ENCODE measurements at regions of chr10 and their contacts with region 1.

Region 1: GRCh38 chr10:119103903-119104652 is at the start of gene DENND10:
- DNase-seq: peak; percentile 56 to 71 (median 60)
- H3K4me3 ChIP-seq: peak within 1 kb of the TSS; percentile 52 to 59
- H3K4me3 Mint-ChIP-seq: peak within 1 kb of the TSS; percentile 79 to 88 (median 86)
- H3K27ac ChIP-seq: peak within 1 kb of the TSS; percentile 54
- H3K27ac Mint-ChIP-seq: peak within 1 kb of the TSS; percentile 72 to 95 (median 91)
- H3K4me1 ChIP-seq: peaks cover 34% of the 10 kb centered on the region
- H3K4me1 Mint-ChIP-seq: peaks cover 14 to 46% (median 34%) of the 10 kb centered on the region in 4 donors
- H3K27me3 ChIP-seq: no peaks in the 10 kb centered on the region
- H3K27me3 Mint-ChIP-seq: no peaks in the 10 kb centered on the region
- total RNA-seq, gene DENND10: 48.0 to 53.4 TPM

Region 2: DNA sequence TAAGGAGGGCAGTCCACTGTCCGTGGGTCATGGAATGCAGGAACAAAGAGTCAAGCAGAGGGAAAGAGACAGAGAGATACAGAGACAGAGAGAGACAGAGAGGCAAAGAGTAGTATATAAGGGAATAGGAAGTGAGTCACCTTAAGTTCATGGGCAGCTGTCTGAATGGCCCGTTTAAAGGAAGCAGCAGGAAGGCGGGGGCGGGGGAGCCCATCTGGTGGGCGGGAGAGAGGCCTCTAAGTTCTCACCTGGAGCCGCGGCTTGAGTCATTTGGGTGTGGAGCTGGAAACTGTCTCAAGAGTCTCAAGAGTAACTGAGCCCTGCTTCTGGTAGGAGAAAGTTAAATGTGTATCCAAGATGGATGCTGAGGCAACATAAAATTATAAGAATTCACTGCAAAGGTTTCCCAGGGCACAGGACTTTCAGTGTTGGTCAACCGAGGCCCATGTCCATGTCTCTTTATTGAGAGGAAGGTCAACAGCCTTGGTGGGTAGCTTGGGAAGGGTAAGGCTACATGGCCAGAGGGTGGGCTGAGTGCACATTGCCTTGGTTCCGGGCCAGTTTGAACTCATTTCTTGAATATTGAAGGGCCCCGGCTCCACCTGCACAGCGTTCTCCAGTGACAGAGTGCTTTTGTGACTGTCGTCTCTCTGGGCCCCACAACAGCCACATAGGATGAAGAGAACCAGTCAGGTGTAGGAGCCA is 263.9 kb before region 1 on chr10:
- CTCF ChIA-PET with region 1: no interaction called
- POLR2A ChIA-PET with region 1: no interaction called
- intact Hi-C with region 1: no loop called
- DNase-seq: no peak
- H3K4me3 ChIP-seq: no peak overlapping the region
- H3K4me3 Mint-ChIP-seq: no peak overlapping the region
- H3K27ac ChIP-seq: no peak overlapping the region
- H3K27ac Mint-ChIP-seq: peak overlapping the region in 1 of 7 donors; percentile 30
- H3K4me1 ChIP-seq: no peaks in the 10 kb centered on the region
- H3K4me1 Mint-ChIP-seq: peaks cover 0 to 13% (median 3%) of the 10 kb centered on the region in 4 donors
- H3K27me3 ChIP-seq: no peaks in the 10 kb centered on the region
- H3K27me3 Mint-ChIP-seq: peaks cover 3 to 4% of the 10 kb centered on the region in 2 donors

Region 3: DNA sequence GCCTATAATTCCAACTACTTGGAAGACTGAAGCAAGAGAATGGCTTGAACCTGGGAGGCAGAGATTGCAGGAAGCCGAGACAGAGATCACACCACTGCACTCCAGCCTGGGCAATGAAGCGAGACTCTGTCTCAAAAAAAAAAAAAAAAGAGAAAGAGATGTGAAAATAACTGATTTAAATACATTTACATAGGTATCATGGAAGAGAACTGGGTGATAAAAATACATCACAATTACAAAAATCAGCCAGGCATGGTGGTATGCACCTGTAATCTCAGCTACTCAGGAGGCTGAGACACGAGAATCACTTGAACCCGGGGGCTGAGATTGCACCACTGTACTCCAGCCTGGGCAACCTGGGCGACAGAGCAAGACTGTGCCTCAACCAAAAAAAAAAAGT is 54.7 kb before region 1 on chr10:
- CTCF ChIA-PET with region 1: no interaction called
- POLR2A ChIA-PET with region 1: no interaction called
- intact Hi-C with region 1: no loop called
- DNase-seq: no peak
- H3K4me3 ChIP-seq: no peak overlapping the region
- H3K4me3 Mint-ChIP-seq: no peak overlapping the region
- H3K27ac ChIP-seq: no peak overlapping the region
- H3K27ac Mint-ChIP-seq: peak overlapping the region in 3 of 7 donors; percentile 11 to 73 (median 53)
- H3K4me1 ChIP-seq: no peaks in the 10 kb centered on the region
- H3K4me1 Mint-ChIP-seq: peaks cover 11 to 43% (median 25%) of the 10 kb centered on the region in 4 donors
- H3K27me3 ChIP-seq: no peaks in the 10 kb centered on the region
- H3K27me3 Mint-ChIP-seq: no peaks in the 10 kb centered on the region

Region 4: GRCh38 chr10:119070395-119071165 is 33.5 kb before region 1 on chr10:
- CTCF ChIA-PET with region 1: interaction called, 4 read pairs
- POLR2A ChIA-PET with region 1: interaction called, 11 read pairs
- intact Hi-C with region 1: no loop called
- DNase-seq: no peak
- H3K4me3 ChIP-seq: no peak overlapping the region
- H3K4me3 Mint-ChIP-seq: no peak overlapping the region
- H3K27ac ChIP-seq: no peak overlapping the region
- H3K27ac Mint-ChIP-seq: peak overlapping the region in 4 of 7 donors; percentile 15 to 59 (median 46)
- H3K4me1 ChIP-seq: peaks cover 31% of the 10 kb centered on the region
- H3K4me1 Mint-ChIP-seq: peaks cover 24 to 46% (median 36%) of the 10 kb centered on the region in 4 donors
- H3K27me3 ChIP-seq: no peaks in the 10 kb centered on the region
- H3K27me3 Mint-ChIP-seq: no peaks in the 10 kb centered on the region

Region 5: GRCh38 chr10:119131512-119132240 is 27.6 kb after region 1 on chr10:
- CTCF ChIA-PET with region 1: interaction called, 3 read pairs
- POLR2A ChIA-PET with region 1: interaction called, 15 read pairs
- intact Hi-C with region 1: loop called (anchors 2 kb)
- DNase-seq: peak; percentile 42 to 57 (median 50)
- H3K4me3 ChIP-seq: peak overlapping the region; percentile 3 to 44
- H3K4me3 Mint-ChIP-seq: peak overlapping the region; percentile 87 to 96 (median 92)
- H3K27ac ChIP-seq: peak overlapping the region; percentile 65
- H3K27ac Mint-ChIP-seq: peak overlapping the region; percentile 86 to 99 (median 95)
- H3K4me1 ChIP-seq: peaks cover 40% of the 10 kb centered on the region
- H3K4me1 Mint-ChIP-seq: peaks cover 31 to 49% (median 38%) of the 10 kb centered on the region in 4 donors
- H3K27me3 ChIP-seq: no peaks in the 10 kb centered on the region
- H3K27me3 Mint-ChIP-seq: no peaks in the 10 kb centered on the region

Measured in CD4-positive, alpha-beta memory T cell (primary cell).